Ovary (tissue), 10 donors: ENCODE measurements at regions of chr2 and their contacts with region 1.

Region 1: GRCh38 chr2:119792907-119793312 is 33.2 kb downstream of the PTPN4 start:
- DNase-seq: no peak
- H3K4me3 ChIP-seq: no peak overlapping the region
- H3K27ac ChIP-seq: no peak overlapping the region
- H3K4me1 ChIP-seq: no peaks in the 10 kb centered on the region
- H3K27me3 ChIP-seq: no peaks in the 10 kb centered on the region
- CTCF ChIP-seq: no peak
- EP300 ChIP-seq: no peak
- POLR2A ChIP-seq: no peak

Region 2: GRCh38 chr2:118278046-118278445 is 1514.9 kb before region 1 on chr2:
- intact Hi-C with region 1: loop called in 1 of 4 experiments (anchors 5 kb)
- DNase-seq: no peak
- H3K4me3 ChIP-seq: no peak overlapping the region
- H3K27ac ChIP-seq: no peak overlapping the region
- H3K4me1 ChIP-seq: no peaks in the 10 kb centered on the region
- H3K27me3 ChIP-seq: no peaks in the 10 kb centered on the region
- CTCF ChIP-seq: no peak
- EP300 ChIP-seq: no peak
- POLR2A ChIP-seq: no peak

Region 3: DNA sequence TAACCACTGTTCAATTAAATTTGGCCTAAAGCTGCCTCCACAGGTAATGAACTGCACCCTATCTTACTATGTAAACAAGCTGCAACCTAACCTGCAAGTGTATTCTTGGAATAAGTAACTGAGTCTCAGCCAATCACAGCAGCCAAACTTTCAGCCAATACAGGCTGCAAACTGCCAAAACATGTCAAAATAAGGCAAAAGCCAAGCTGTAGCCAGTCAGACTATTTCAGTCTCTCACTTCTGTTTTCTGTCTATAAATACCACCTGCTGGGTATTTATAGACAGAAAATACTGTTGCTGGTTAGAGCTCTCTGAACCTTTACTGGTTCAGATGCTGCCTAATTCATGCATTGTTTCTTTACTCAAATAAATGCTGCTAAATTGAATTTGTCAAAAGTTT is 440.6 kb before region 1 on chr2:
- intact Hi-C with region 1: no loop called
- DNase-seq: no peak
- H3K4me3 ChIP-seq: no peak overlapping the region
- H3K27ac ChIP-seq: no peak overlapping the region
- H3K4me1 ChIP-seq: peaks cover 3% of the 10 kb centered on the region
- H3K27me3 ChIP-seq: no peaks in the 10 kb centered on the region
- CTCF ChIP-seq: no peak
- EP300 ChIP-seq: no peak
- POLR2A ChIP-seq: no peak